Tibial artery (tissue), 4 donors: ENCODE measurements at regions of chr1 and their contacts with region 1.

Region 1: DNA sequence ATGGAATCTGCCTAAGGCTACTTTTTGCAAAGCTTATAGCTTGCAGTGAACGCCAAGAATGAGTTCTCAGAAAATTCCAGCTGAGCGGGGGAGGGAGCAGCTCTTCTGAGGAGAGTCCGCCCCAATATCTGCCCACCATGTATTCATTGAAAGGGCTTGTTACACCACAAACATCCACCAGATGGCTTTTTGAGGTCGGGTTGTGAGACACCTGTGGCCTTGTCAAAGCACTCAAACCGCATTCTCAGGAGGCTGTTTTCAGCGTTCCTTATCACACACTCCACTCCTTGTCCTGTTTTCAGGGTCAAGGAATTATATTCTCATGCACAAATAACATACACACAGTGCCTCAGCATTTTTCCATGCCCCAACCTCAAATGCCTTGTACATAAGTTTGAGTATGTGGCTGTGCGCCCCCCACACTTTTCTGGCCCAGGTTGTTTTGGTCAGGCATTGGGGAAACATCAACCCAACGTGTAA is 3.9 kb upstream of the C4BPB start:
- DNase-seq: no peak
- H3K4me3 ChIP-seq: no peak overlapping the region
- H3K27ac ChIP-seq: no peak overlapping the region
- H3K4me1 ChIP-seq: no peaks in the 10 kb centered on the region
- H3K27me3 ChIP-seq: no peaks in the 10 kb centered on the region
- CTCF ChIP-seq: peak; percentile 42 to 51

Region 2: DNA sequence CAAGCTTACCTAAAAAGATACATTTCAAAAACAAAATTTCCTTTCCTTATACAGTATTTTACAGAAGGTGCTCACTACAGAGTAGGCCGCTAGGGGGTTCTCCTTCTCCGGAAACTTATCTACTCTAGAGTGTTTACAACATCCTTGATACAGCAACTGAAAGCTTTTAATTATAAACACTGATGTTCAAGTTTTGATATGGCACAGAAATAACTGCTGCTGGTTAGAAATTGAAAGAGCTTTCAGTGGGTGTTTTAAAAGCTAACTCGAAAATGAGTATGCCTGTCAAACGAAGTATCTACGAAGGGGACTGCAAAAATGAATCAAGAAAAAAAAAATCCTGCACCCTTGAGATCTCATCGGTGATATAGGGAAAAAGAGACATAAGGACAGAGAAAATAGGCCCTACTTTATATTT is 34.8 kb before region 1 on chr1:
- intact Hi-C with region 1: loop called (anchors 5 kb)
- DNase-seq: peak in 1 of 2 donors; percentile 61
- H3K4me3 ChIP-seq: peak overlapping the region; percentile 83 to 85
- H3K27ac ChIP-seq: peak overlapping the region; percentile 85 to 86
- H3K4me1 ChIP-seq: peaks cover 0 to 61% (median 29%) of the 10 kb centered on the region in 4 donors
- H3K27me3 ChIP-seq: no peaks in the 10 kb centered on the region
- CTCF ChIP-seq: peak; percentile 78 to 79

Region 3: DNA sequence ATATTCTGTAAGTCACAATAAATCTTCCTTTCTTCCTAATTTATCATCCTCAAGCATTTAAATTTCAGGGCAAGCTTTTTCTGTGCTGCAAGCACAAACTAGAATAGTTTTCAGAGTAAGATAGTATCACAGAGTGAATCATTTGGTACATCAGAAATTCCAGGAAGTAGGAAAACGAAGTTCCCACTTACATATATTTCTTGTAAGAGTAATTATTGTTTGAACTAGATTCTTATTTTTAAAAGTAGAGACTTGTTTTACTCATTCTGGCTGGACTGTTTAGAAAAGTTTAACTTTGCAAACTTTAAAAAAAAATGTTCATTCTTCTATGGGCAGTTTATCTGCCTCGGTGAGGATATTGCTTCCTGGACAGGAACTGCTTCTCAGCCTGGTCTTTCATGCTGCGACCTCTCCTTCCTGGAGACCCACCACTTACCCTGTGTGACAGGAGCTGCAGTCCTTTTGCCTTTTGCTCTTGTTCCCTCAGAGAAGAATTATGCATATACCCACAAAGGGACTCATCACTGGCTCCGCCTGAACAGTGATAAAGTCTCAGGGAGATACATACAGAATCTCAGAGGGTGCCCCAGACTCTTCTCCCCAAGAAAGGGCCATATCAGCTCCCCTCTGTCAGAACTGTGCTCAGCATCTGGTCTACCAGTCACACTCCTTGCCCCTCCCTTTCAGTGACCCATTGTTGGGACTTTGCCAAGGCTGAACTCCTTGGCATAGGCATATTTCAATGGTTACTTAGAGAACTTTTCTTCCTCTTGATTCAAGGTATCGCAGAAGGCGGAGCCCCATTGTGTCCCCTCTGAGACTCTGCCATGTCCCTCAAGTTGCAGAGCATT is 134.0 kb after region 1 on chr1:
- intact Hi-C with region 1: no loop called
- DNase-seq: peak in 1 of 2 donors; percentile 21
- H3K4me3 ChIP-seq: no peak overlapping the region
- H3K27ac ChIP-seq: no peak overlapping the region
- H3K4me1 ChIP-seq: peaks cover 0 to 24% (median 11%) of the 10 kb centered on the region in 4 donors
- H3K27me3 ChIP-seq: no peaks in the 10 kb centered on the region
- CTCF ChIP-seq: no peak

Region 4: GRCh38 chr1:207259391-207259790 is 174.7 kb after region 1 on chr1:
- intact Hi-C with region 1: no loop called
- DNase-seq: no peak
- H3K4me3 ChIP-seq: no peak overlapping the region
- H3K27ac ChIP-seq: no peak overlapping the region
- H3K4me1 ChIP-seq: no peaks in the 10 kb centered on the region
- H3K27me3 ChIP-seq: no peaks in the 10 kb centered on the region
- CTCF ChIP-seq: peak in 1 of 2 experiments; percentile 7

Region 5: DNA sequence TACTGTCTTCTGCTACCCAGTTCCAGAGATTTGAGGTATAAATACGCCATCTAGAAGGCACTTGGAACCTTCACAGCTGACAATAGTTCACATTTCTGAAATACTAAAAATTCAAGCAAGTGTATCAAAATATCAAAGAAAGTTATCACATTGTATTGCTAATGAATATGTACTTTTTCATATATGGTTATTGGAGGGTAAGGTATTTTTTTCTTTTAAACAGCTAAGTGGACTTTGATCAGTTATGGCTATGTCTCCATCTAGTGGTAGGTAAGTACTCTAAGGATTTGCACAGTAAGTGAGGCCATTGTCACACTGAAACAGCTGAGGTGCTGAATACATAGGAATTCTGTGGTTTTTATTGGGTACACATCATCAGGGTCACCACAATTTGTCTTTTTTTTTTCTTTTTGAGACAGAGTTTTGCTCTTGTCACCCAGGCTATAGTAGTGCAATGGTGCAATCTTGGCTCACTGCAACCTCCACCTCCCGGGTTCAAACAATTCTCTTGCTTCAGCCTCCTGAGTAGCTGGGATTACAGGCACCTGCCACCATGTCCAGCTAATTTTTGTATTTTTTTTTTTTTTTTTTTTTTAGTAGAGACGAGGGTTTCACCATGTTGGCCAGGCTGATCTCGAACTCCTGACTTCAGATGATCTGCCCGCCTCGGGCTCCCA is 320.2 kb after region 1 on chr1:
- intact Hi-C with region 1: loop called (anchors 5 kb)
- DNase-seq: no peak
- H3K4me3 ChIP-seq: no peak overlapping the region
- H3K27ac ChIP-seq: no peak overlapping the region
- H3K4me1 ChIP-seq: no peaks in the 10 kb centered on the region
- H3K27me3 ChIP-seq: no peaks in the 10 kb centered on the region
- CTCF ChIP-seq: peak; percentile 62 to 66